ENCODE measurements at regions of chr2 and their contacts with region 1.

Region 1: GRCh38 chr2:44167940-44168680 is 565 bp upstream of the PPM1B start:
- DNase-seq: peak; percentile 82 to 100 (median 98)
- ATAC-seq: peak; percentile 80 to 83 (median 81)
- H3K4me3 ChIP-seq: peak overlapping the region; percentile 73 to 96
- H3K4me3 Mint-ChIP-seq: peak overlapping the region; percentile 92 to 98 (median 95)
- H3K27ac ChIP-seq: peak overlapping the region; percentile 98
- H3K27ac Mint-ChIP-seq: peak overlapping the region; percentile 100
- H3K4me1 ChIP-seq: peaks cover 14 to 19% of the 10 kb centered on the region in 2 experiments
- H3K4me1 Mint-ChIP-seq: peaks cover 39 to 40% (median 39%) of the 10 kb centered on the region in 3 donors
- H3K27me3 ChIP-seq: no peaks in the 10 kb centered on the region
- H3K27me3 Mint-ChIP-seq: no peaks in the 10 kb centered on the region

Region 2: GRCh38 chr2:43985359-43985758 is 182.8 kb before region 1 on chr2:
- CTCF ChIA-PET with region 1: no interaction called
- POLR2A ChIA-PET with region 1: no interaction called
- DNase-seq: no peak
- ATAC-seq: no peak
- H3K4me3 ChIP-seq: no peak overlapping the region
- H3K4me3 Mint-ChIP-seq: no peak overlapping the region
- H3K27ac ChIP-seq: no peak overlapping the region
- H3K27ac Mint-ChIP-seq: no peak overlapping the region
- H3K4me1 ChIP-seq: no peaks in the 10 kb centered on the region
- H3K4me1 Mint-ChIP-seq: peaks cover 30 to 37% (median 36%) of the 10 kb centered on the region in 3 donors
- H3K27me3 ChIP-seq: no peaks in the 10 kb centered on the region
- H3K27me3 Mint-ChIP-seq: no peaks in the 10 kb centered on the region

Region 3: GRCh38 chr2:44120428-44120827 is 47.7 kb before region 1 on chr2:
- CTCF ChIA-PET with region 1: no interaction called
- POLR2A ChIA-PET with region 1: no interaction called
- DNase-seq: peak in 5 of 35 experiments; percentile 4 to 59 (median 8)
- ATAC-seq: peak; percentile 78 to 91 (median 87)
- H3K4me3 ChIP-seq: no peak overlapping the region
- H3K4me3 Mint-ChIP-seq: no peak overlapping the region
- H3K27ac ChIP-seq: no peak overlapping the region
- H3K27ac Mint-ChIP-seq: no peak overlapping the region
- H3K4me1 ChIP-seq: peaks cover 6 to 21% of the 10 kb centered on the region in 2 experiments
- H3K4me1 Mint-ChIP-seq: peaks cover 6 to 19% (median 17%) of the 10 kb centered on the region in 3 donors
- H3K27me3 ChIP-seq: peaks cover 0 to 5% of the 10 kb centered on the region in 2 experiments
- H3K27me3 Mint-ChIP-seq: no peaks in the 10 kb centered on the region

Region 4: GRCh38 chr2:44130441-44130840 is 37.7 kb before region 1 on chr2:
- CTCF ChIA-PET with region 1: no interaction called
- POLR2A ChIA-PET with region 1: no interaction called
- DNase-seq: no peak
- ATAC-seq: no peak
- H3K4me3 ChIP-seq: no peak overlapping the region
- H3K4me3 Mint-ChIP-seq: no peak overlapping the region
- H3K27ac ChIP-seq: no peak overlapping the region
- H3K27ac Mint-ChIP-seq: no peak overlapping the region
- H3K4me1 ChIP-seq: no peaks in the 10 kb centered on the region
- H3K4me1 Mint-ChIP-seq: no peaks in the 10 kb centered on the region
- H3K27me3 ChIP-seq: peaks cover 0 to under 1% of the 10 kb centered on the region in 2 experiments
- H3K27me3 Mint-ChIP-seq: no peaks in the 10 kb centered on the region

Region 5: GRCh38 chr2:44361330-44362206 is 193.5 kb after region 1 on chr2 and contains the starts of genes CAMKMT and PREPL:
- CTCF ChIA-PET with region 1: interaction called in 1 of 2 experiments, 4 read pairs
- POLR2A ChIA-PET with region 1: interaction called in 1 of 2 experiments, 24 read pairs
- DNase-seq: peak; percentile 93 to 99 (median 97)
- ATAC-seq: peak; percentile 82 to 87 (median 84)
- H3K4me3 ChIP-seq: peak within 1 kb of the TSS; percentile 84 to 91
- H3K4me3 Mint-ChIP-seq: peak within 1 kb of the TSS; percentile 97 to 99 (median 97)
- H3K27ac ChIP-seq: peak within 1 kb of the TSS; percentile 100
- H3K27ac Mint-ChIP-seq: peak within 1 kb of the TSS; percentile 100
- H3K4me1 ChIP-seq: peaks cover 12 to 27% of the 10 kb centered on the region in 2 experiments
- H3K4me1 Mint-ChIP-seq: peaks cover 52 to 64% (median 52%) of the 10 kb centered on the region in 3 donors
- H3K27me3 ChIP-seq: no peaks in the 10 kb centered on the region
- H3K27me3 Mint-ChIP-seq: no peaks in the 10 kb centered on the region
- total RNA-seq, gene CAMKMT: 11.9 to 20.2 (median 16.5) TPM
- total RNA-seq, gene PREPL: 27.7 to 33.3 (median 30.7) TPM